MCF 10A (cell line): ENCODE measurements at regions of chr5 and their contacts with region 1.

Region 1: DNA sequence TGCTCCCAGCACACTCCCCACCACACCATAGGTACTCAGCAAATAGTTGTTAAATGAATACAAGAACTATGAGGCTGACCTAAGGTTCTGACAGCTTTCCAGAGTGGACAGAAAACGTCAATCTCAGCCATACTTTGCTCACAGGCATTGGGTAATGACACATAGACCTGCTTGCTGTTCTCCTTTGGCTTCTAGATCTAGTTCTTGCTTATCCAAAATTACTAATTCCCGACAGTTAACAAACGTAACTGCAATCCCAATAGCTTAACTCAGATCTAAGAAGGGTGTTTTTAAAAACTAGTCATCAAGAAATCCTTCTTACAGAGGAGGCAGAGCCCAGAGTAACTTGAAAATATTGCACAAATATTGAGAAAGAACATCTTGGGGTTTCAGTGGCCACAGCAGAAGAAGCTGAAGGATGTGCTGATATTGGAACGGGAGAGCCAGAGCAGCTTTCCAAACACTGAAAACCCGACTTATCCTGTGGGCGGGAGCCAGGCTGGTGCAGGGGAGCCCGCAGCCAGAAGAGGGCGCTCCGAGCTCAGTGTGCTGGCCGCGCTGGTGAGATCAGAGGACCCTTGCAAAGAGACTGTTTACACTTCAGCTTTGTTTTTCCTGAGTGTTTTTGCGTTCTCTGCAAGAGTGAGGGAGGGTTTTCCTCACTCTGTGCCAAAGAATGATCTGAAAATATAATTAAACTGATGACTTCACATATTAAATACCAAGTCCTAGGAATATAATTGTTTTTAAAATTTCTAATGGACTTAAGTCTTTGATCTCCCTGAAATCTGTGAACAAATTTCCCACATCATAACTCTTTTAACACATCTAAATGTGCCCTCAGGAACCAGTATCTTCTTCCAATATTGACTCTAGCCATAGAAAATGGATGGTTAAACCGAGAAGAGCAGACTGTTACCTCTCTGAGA is 30.3 kb downstream of the FGF1 start:
- DNase-seq: peak; percentile 84
- H3K4me3 Mint-ChIP-seq: no peak overlapping the region
- H3K27ac Mint-ChIP-seq: no peak overlapping the region
- H3K4me1 Mint-ChIP-seq: no peaks in the 10 kb centered on the region
- H3K27me3 Mint-ChIP-seq: no peaks in the 10 kb centered on the region
- CTCF ChIP-seq: peak; percentile 99

Region 2: GRCh38 chr5:141940695-141941271 is 714.8 kb before region 1 on chr5:
- CTCF ChIA-PET with region 1: no interaction called
- POLR2A ChIA-PET with region 1: no interaction called
- intact Hi-C with region 1: no loop called
- DNase-seq: no peak
- H3K4me3 Mint-ChIP-seq: no peak overlapping the region
- H3K27ac Mint-ChIP-seq: peak overlapping the region; percentile 28
- H3K4me1 Mint-ChIP-seq: peaks cover 9% of the 10 kb centered on the region
- H3K27me3 Mint-ChIP-seq: no peaks in the 10 kb centered on the region
- CTCF ChIP-seq: no peak

Region 3: GRCh38 chr5:142034994-142035393 is 620.6 kb before region 1 on chr5:
- CTCF ChIA-PET with region 1: no interaction called
- POLR2A ChIA-PET with region 1: no interaction called
- intact Hi-C with region 1: no loop called
- DNase-seq: no peak
- H3K4me3 Mint-ChIP-seq: no peak overlapping the region
- H3K27ac Mint-ChIP-seq: no peak overlapping the region
- H3K4me1 Mint-ChIP-seq: no peaks in the 10 kb centered on the region
- H3K27me3 Mint-ChIP-seq: no peaks in the 10 kb centered on the region
- CTCF ChIP-seq: no peak

Region 4: DNA sequence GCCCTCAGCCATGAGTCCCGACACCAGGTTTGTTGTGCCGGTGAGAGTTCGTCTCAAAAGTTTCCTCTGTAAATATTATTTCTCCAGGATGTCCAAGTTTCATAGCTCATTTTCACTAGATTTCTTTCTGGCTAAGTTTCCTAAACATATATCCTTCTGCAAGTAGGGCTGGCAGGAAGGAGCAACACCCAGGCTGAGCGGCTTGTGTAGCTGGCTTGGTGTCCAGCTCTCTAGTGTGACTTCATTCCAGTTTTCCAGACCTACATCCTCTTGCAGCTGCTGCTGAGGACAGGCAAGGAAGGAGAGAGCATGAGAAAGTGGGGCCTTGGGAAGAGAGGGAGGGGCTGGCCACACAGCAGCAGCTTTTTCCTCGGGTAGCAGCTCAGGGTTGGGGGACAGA is 50.0 kb before region 1 on chr5:
- CTCF ChIA-PET with region 1: interaction called, 45 read pairs
- POLR2A ChIA-PET with region 1: no interaction called
- intact Hi-C with region 1: no loop called
- DNase-seq: no peak
- H3K4me3 Mint-ChIP-seq: no peak overlapping the region
- H3K27ac Mint-ChIP-seq: no peak overlapping the region
- H3K4me1 Mint-ChIP-seq: peaks cover 10% of the 10 kb centered on the region
- H3K27me3 Mint-ChIP-seq: no peaks in the 10 kb centered on the region
- CTCF ChIP-seq: no peak

Region 5: DNA sequence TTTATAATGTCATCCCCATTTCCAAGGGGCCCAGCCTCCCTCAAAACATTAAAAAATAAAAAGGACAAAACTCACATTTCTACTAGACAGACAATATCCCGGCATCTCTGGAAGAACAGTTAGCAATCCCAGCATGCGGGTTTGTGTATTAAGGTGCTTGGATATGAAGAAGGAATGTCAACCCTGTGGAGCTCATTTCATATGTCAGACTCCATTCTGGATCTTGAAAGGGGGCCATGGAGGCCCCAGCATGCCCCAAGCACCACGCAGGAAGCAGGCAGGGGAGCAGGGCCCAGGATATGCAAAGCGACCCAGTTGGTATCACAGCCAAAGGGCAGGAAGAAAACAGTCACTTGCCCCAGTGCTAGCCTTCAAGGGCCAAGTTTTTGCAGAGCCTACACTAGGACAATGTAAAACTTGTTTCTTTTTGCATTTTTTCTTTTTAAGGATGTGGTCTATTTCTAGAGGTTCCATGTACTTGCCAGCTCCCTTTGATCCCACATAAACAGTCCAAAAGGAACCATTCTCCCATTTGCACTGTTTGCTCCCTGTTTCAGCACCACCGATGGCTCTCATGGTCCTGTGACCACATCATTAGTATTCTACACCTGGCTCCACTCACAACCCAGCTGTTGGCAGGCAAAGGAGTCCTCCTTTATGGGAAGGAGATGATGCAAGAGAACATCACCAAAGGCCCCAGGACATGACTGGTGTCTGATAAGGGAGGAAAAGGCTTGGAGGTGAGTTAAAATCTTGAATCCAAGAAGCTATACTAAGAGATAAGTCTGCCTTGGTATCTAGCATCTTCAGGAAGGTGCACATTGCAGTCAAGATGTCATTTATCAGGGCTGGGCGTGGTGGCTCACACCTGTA is 28.0 kb before region 1 on chr5:
- CTCF ChIA-PET with region 1: interaction called, 19 read pairs
- POLR2A ChIA-PET with region 1: no interaction called
- intact Hi-C with region 1: no loop called
- DNase-seq: peak; percentile 42
- H3K4me3 Mint-ChIP-seq: no peak overlapping the region
- H3K27ac Mint-ChIP-seq: no peak overlapping the region
- H3K4me1 Mint-ChIP-seq: no peaks in the 10 kb centered on the region
- H3K27me3 Mint-ChIP-seq: no peaks in the 10 kb centered on the region
- CTCF ChIP-seq: no peak

Region 6: GRCh38 chr5:142667831-142668230 is 12.2 kb after region 1 on chr5:
- CTCF ChIA-PET with region 1: interaction called, 114 read pairs
- POLR2A ChIA-PET with region 1: interaction called, 4 read pairs
- intact Hi-C with region 1: no loop called
- DNase-seq: no peak
- H3K4me3 Mint-ChIP-seq: no peak overlapping the region
- H3K27ac Mint-ChIP-seq: no peak overlapping the region
- H3K4me1 Mint-ChIP-seq: no peaks in the 10 kb centered on the region
- H3K27me3 Mint-ChIP-seq: no peaks in the 10 kb centered on the region
- CTCF ChIP-seq: no peak

Region 7: GRCh38 chr5:142699184-142699720 is 43.6 kb after region 1 on chr5:
- CTCF ChIA-PET with region 1: interaction called, 1,243 read pairs
- POLR2A ChIA-PET with region 1: interaction called, 31 read pairs
- intact Hi-C with region 1: loop called (anchors 1 kb)
- DNase-seq: peak; percentile 93
- H3K4me3 Mint-ChIP-seq: no peak overlapping the region
- H3K27ac Mint-ChIP-seq: no peak overlapping the region
- H3K4me1 Mint-ChIP-seq: peaks cover 14% of the 10 kb centered on the region
- H3K27me3 Mint-ChIP-seq: no peaks in the 10 kb centered on the region
- CTCF ChIP-seq: peak; percentile 100

Region 8: DNA sequence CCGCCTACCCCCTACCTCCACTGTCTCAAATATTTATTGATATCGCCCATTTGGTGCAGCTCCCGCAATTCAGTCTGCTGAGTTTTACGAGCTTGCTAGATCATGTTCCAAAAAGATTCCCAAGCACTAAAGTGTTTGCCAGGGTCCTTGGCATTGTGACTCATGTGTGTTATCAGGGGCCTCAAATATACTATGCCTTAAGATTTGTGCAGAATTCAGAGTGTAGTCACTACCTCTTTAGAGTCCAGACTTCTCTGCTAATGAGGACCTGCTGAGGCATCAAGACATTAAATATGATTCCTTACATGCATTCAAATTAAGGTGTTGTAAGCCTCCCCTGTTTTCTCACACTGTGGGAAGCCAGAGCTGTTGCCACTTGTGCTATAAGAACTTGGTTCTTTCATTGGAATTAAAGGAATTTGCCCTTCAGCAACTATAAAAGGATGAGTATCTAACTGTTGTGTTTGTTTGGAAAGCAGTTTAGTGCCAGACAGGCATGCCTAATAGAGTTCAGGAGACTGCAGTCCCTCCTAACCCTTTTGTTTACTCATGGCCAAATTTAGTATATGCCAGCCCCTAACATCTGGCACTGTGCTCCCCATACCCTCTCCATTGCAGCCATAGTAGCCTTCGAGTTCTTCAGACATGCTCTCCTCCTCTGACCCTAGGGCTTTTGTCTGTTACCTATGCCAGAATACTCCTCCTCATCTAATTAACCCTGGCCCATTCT is 431.5 kb after region 1 on chr5:
- CTCF ChIA-PET with region 1: no interaction called
- POLR2A ChIA-PET with region 1: no interaction called
- intact Hi-C with region 1: no loop called
- DNase-seq: peak; percentile 67
- H3K4me3 Mint-ChIP-seq: no peak overlapping the region
- H3K27ac Mint-ChIP-seq: peak overlapping the region; percentile 32
- H3K4me1 Mint-ChIP-seq: peaks cover 14% of the 10 kb centered on the region
- H3K27me3 Mint-ChIP-seq: no peaks in the 10 kb centered on the region
- CTCF ChIP-seq: no peak